Ovary (tissue), 10 donors: ENCODE measurements at regions of chr3 and their contacts with region 1.

Region 1: DNA sequence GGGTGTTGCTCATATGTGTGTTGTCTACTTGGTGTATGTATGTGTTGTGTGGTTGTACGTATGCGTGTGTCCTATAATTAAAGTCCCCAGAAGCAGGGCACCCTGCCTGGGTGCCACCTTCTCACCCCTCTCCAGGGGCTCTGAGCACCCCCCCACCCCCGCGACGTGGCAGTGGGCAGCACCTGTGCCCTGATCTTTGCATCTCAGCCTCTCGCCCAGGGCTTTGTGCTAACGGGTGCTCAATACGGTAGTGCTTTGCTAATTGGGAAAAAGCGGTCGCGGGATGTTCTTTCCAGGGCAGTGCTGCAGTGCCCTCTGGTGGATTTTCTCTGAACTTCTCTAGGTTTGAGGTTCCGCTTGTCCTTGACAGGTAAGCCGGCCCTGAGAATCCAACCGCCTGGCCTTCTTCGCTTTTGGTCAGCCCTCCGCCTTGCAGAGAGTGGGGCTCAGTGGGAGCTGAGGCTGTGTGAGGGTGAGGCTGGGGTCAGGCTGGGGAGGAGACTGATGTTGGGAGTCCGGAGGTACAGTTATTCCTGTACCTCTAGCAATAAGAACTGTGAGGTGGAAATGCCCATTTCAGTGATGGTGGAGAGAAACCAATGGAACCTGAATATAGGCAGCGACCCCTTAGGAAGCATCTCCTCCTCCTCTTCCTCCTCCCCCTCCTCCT is 17.6 kb upstream of the EPHB3 start:
- DNase-seq: peak; percentile 65 to 81 (median 79)
- H3K4me3 ChIP-seq: no peak overlapping the region
- H3K27ac ChIP-seq: no peak overlapping the region
- H3K4me1 ChIP-seq: peaks cover 1% of the 10 kb centered on the region
- H3K27me3 ChIP-seq: no peaks in the 10 kb centered on the region
- CTCF ChIP-seq: peak; percentile 77 to 93 (median 88)
- EP300 ChIP-seq: no peak
- POLR2A ChIP-seq: no peak

Region 2: DNA sequence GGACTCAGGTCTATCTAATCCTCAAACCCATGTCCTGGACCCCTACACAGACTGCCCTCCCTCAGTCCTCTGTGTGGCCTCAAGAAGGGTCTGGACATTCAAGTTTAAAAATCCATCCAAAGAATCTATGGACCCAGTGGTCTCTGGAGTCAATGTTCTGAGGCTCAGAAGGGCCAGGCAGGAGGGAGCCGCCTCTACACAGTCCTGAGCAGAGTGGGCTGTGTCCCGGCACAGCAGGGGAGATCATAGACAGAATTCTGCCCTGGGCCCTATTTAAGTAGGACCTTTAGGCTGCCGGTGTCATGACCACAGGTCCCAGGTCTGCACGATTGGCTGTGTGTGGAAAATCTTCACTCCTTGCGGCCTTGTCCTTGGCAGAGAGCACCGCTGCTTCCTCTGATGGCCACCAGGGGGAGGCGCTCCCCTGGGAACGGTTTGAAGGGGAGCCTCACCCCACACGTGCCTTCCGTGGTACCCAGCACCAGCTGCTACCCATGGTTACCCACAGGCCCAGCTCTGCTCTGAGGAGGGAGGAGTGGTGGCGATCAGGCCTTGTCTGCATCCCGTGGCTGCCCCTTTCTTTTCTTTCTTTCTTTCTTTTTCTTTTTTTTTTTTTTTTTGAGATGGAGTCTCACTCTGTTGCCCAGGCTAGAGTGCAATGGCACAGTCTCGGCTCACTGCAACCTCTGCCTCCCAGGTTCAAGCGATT is 126.2 kb before region 1 on chr3:
- intact Hi-C with region 1: loop called in 1 of 4 experiments (anchors 10 kb)
- DNase-seq: peak; percentile 73 to 87 (median 81)
- H3K4me3 ChIP-seq: no peak overlapping the region
- H3K27ac ChIP-seq: no peak overlapping the region
- H3K4me1 ChIP-seq: peaks cover 3% of the 10 kb centered on the region
- H3K27me3 ChIP-seq: no peaks in the 10 kb centered on the region
- CTCF ChIP-seq: peak; percentile 72 to 87 (median 82)
- EP300 ChIP-seq: no peak
- POLR2A ChIP-seq: no peak